Posterior vena cava (tissue), 2 donors: ENCODE measurements at regions of chr1 and their contacts with region 1.

Region 1: GRCh38 chr1:8348777-8349491 is 31.0 kb downstream of the SLC45A1 start:
- DNase-seq: peak; percentile 91

Region 2: DNA sequence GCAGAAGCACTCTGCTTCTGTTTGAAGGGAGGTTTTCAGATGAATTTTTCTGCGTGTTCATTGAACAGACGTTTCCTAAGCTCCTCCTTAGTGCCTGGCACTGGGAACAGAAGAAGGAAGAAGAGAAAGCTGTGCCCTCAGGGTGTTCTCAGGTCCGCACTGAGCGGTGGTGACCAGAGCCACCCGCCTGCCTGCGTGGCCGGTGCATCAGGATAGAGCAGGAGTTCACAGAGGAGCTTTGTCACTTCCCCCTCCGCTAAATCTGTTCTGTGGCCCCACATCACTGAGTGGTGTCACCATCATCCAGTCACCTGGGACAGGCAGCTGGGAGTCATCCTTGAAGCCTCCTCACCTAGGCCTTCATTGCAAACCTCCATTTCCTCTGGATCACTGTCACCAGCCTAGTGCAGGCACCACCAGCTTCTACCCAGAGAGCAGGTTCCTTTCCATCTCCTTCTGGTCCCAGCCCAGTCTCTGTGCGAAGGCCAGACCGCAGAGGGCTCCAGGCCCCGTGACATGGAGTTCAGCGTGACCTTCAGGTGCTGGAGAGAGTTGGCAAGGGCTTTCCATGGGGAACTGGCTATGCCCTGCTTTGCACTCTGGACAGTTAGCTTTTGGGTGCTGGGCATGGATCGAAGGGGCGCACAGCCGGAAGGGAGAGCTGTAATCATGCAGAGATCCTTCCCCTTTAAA is 365.7 kb before region 1 on chr1:
- intact Hi-C with region 1: loop called in 1 of 2 experiments (anchors 5 kb)
- DNase-seq: peak; percentile 46

Region 3: DNA sequence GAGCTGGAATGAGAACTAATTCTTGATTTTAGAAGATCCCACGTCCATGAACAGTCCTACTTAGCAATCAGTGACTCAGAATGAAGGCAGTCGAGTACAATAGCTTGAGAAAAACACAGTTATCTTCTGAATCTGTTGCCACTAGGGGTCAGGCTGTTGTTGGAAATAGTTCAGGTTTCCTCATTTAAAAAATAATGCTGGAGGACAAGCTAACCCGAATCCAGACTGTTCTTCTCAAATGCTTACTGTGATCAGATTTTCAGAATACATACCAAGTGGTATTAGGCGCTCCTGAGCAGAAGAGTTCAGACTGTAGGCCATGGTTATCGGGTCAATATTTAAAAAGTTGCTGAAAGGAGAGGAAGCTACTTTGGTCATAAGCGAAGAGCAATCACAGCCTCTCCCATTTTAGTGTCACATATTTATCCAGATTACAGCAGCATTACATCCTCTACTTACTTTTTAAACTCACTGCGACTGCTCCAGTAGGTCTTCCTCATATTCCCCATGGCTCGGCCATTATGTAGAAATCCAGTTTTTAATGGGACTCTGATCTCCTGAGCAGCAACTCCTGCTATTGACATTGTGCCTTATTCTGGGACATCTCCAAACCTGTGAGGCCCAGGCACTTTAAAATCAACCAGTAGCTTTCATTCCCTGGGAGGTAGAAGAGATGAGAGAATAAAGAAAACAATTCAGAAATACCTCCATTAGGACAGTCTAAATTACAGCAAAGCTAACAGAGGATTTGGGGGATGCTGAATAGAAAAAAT is 333.7 kb before region 1 on chr1:
- intact Hi-C with region 1: loop called in 1 of 2 experiments (anchors 10 kb)
- DNase-seq: no peak

Region 4: DNA sequence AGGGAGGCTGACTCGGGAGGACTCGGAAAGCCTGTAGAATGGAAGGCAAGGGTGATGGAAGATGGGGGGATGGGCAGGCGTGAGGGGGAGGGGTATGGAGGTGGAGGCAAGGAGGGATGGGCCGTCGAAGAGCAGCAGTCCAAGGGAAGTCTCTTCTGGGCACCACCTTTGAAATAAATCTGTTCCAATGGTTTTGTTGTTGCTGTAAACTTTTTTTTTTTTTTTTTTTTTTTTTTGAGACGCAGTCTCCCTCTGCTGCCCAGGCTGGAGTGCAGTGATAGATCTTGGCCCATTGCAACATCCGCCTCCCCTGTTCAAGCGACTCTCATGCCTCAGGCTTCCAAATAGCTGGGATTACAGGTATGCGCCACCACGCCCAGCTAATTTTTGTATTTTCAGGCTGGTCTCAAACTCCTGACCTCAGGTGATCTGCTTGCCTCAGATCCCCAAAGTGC is 110.1 kb before region 1 on chr1:
- intact Hi-C with region 1: no loop called
- DNase-seq: no peak

Region 5: GRCh38 chr1:8283058-8283884 is 65.7 kb before region 1 on chr1:
- intact Hi-C with region 1: no loop called
- DNase-seq: no peak